Sigmoid colon (tissue), 7 donors: ENCODE measurements at regions of chr7 and their contacts with region 1.

Region 1: GRCh38 chr7:137454246-137454724 is 110.8 kb upstream of the PTN start:
- DNase-seq: no peak
- H3K4me3 ChIP-seq: peak overlapping the region in 2 of 4 donors; percentile 6 to 11
- H3K27ac ChIP-seq: peak overlapping the region; percentile 53 to 74 (median 70)
- H3K4me1 ChIP-seq: peaks cover 0 to 20% (median 6%) of the 10 kb centered on the region in 4 donors
- H3K27me3 ChIP-seq: no peaks in the 10 kb centered on the region
- CTCF ChIP-seq: peak; percentile 63 to 69 (median 66)
- EP300 ChIP-seq: no peak
- POLR2A ChIP-seq: no peak

Region 2: GRCh38 chr7:137169282-137169698 is 285.0 kb before region 1 on chr7:
- intact Hi-C with region 1: loop called (anchors 2 kb)
- DNase-seq: peak; percentile 87
- H3K4me3 ChIP-seq: no peak overlapping the region
- H3K27ac ChIP-seq: peak overlapping the region in 2 of 4 donors; percentile 37 to 39
- H3K4me1 ChIP-seq: peaks cover 0 to 19% (median 6%) of the 10 kb centered on the region in 4 donors
- H3K27me3 ChIP-seq: no peaks in the 10 kb centered on the region
- CTCF ChIP-seq: peak; percentile 71 to 86 (median 78)
- EP300 ChIP-seq: no peak
- POLR2A ChIP-seq: no peak

Region 3: DNA sequence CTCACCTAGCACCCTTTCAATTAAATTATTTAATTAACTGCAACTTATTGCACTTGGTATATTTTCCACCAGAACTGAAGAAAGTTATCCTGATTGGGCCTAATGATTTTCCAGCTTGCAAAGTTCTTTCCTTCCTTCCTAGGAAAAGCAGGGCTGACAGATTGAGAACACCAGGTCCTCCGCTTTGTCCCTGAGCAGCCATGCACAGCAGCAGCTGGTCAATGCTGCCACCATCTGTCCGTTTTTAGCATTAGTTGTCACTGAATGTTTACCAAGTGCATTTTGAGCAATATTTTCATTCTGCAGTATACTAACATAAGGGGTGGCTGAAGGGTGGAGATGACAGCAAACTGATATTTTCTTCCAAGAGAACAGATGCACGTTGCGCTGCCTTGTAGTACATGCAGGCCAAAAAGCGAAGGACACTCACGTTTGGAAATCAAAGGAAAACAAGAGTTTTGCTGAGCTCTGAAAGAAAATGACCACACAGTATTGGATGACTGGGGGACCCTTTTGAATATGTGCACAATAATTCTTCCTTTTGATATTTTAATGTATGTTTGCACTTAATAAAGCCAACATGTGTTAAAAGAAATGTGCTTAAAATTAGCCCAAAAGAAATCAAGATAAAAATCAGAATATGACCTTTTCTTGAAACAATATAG is 138.1 kb after region 1 on chr7:
- intact Hi-C with region 1: loop called (anchors 2 kb)
- DNase-seq: peak; percentile 80
- H3K4me3 ChIP-seq: no peak overlapping the region
- H3K27ac ChIP-seq: peak overlapping the region in 3 of 4 donors; percentile 56 to 63 (median 57)
- H3K4me1 ChIP-seq: peaks cover 0 to 36% (median 32%) of the 10 kb centered on the region in 4 donors
- H3K27me3 ChIP-seq: no peaks in the 10 kb centered on the region
- CTCF ChIP-seq: peak; percentile 64 to 83 (median 72)
- EP300 ChIP-seq: no peak
- POLR2A ChIP-seq: no peak